ENCODE measurements at regions of chr6 and their contacts with region 1.

Region 1: DNA sequence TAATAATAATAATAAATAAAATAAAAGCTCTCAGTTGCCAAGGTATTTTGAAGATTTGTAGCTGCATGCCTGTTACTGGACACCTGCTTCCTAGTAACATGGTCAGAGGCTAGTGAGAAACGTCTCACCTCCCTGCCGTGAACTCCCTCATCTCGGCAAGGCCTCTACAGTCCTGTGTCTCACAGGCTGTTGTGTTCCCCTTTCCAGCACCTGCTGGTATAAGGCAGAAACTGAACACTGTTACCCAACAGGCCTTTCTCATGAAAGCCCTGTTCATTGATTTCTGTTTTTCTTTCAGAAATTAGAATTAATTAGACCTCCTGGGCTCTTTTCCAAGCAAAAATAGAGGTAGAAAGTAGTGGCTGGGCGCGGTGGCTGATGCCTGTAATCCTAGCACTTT is 17.6 kb upstream of the SRSF3 start:
- DNase-seq: no peak
- H3K4me3 Mint-ChIP-seq: no peak overlapping the region
- H3K27ac Mint-ChIP-seq: no peak overlapping the region
- H3K4me1 Mint-ChIP-seq: peaks cover 6% of the 10 kb centered on the region
- H3K27me3 Mint-ChIP-seq: no peaks in the 10 kb centered on the region

Region 2: DNA sequence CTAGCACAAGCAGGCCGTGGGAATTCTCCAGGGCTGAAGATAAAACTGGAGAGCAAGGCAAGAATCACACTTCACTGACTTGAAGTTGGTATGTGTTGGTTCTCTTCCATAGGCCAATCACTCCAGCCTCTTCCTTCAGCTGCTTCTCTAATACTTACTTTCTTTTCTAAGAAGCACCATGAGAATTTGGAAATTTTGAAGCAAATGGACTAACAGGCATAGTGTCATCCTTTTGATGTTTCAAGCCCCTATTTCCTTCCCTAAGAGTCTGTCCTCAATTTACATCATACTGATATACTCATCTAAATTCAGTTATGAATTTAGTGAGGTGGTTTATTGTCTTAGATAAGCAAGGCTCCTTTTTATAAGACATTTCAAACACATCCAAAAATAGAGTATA is 576.1 kb before region 1 on chr6:
- CTCF ChIA-PET with region 1: no interaction called
- intact Hi-C with region 1: no loop called
- DNase-seq: no peak
- H3K4me3 Mint-ChIP-seq: no peak overlapping the region
- H3K27ac Mint-ChIP-seq: no peak overlapping the region
- H3K4me1 Mint-ChIP-seq: no peaks in the 10 kb centered on the region
- H3K27me3 Mint-ChIP-seq: peaks cover 2% of the 10 kb centered on the region

Region 3: DNA sequence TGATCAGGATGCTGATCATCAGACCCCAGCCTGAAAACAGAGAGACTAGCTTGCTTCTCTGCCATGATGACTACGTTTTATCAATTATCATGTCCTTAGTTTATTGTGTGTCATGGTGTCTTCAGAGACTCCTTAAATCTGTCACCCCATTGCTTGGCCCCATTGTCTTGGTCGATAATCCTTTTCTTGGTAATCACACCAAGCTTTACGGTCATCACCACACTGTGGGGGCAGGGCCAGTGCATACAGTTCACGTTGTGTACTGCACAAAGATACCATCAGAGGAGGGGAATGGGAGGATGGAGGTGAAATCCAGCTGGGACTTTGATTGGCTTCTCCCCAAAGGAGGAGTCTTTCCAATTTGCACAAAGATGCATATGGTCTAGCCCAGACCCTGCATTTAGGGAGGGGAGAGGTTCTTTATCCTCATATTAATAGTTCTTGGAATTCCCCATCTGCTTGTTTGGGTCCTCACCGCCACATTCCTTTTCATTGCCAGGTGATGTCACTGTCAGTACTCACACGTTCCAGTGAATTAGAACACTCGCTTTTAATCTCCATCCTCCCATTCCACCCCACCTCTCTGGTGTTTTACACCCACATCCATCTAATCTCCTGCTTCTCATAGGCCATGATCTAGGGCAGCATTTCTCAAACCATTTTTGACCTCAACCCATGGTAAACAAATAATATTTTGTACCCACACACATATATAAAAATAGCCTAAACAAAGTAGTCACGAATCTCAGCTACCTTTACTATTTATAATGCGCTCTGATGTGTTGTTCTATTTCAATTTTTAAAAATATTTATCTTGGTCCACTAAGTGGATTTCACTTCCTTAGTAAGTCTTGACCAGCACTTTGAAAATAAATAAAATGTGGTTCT is 194.8 kb before region 1 on chr6:
- CTCF ChIA-PET with region 1: no interaction called
- intact Hi-C with region 1: no loop called
- DNase-seq: no peak
- H3K4me3 Mint-ChIP-seq: no peak overlapping the region
- H3K27ac Mint-ChIP-seq: peak overlapping the region; percentile 6
- H3K4me1 Mint-ChIP-seq: peaks cover 22% of the 10 kb centered on the region
- H3K27me3 Mint-ChIP-seq: no peaks in the 10 kb centered on the region

Region 4: GRCh38 chr6:36392621-36393020 is 183.9 kb before region 1 on chr6:
- CTCF ChIA-PET with region 1: no interaction called
- intact Hi-C with region 1: no loop called
- DNase-seq: no peak
- H3K4me3 Mint-ChIP-seq: no peak overlapping the region
- H3K27ac Mint-ChIP-seq: no peak overlapping the region
- H3K4me1 Mint-ChIP-seq: peaks cover 6% of the 10 kb centered on the region
- H3K27me3 Mint-ChIP-seq: peaks cover 7% of the 10 kb centered on the region

Region 5: GRCh38 chr6:36423101-36423824 is 153.3 kb before region 1 on chr6:
- CTCF ChIA-PET with region 1: no interaction called
- intact Hi-C with region 1: loop called (anchors 1 kb)
- DNase-seq: peak; percentile 99
- H3K4me3 Mint-ChIP-seq: peak overlapping the region; percentile 89
- H3K27ac Mint-ChIP-seq: peak overlapping the region; percentile 95
- H3K4me1 Mint-ChIP-seq: peaks cover 15% of the 10 kb centered on the region
- H3K27me3 Mint-ChIP-seq: no peaks in the 10 kb centered on the region